Ascending aorta (tissue), 2 donors: ENCODE measurements at regions of chr10 and their contacts with region 1.

Region 1: DNA sequence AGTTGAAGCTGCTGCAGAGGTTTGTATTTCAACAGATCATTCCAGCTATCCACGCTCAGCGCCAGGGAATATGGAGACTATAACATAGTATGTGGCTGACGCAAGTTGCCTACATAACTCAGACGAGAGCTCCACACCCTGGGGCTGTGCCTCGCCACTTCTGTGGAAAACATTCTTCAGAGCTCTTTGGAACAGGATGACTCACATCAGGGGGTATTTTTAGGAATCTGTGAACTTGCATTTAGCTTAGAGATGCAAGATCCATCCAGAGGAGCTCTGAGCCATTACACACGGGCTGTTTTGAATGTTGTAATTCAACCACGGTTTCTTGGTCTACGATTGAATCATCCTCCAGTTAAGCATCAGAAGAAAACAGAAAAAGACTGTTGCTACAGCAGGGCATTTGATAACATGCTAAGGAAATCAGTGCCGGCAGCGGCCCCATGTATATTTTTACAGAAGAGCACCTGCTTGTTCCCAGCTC is 481.5 kb upstream of the AKR1E2 start:
- DNase-seq: peak; percentile 65 to 96
- H3K4me3 ChIP-seq: no peak overlapping the region
- H3K27ac ChIP-seq: peak overlapping the region; percentile 85 to 89
- H3K4me1 ChIP-seq: peaks cover 13 to 30% of the 10 kb centered on the region in 2 donors
- H3K27me3 ChIP-seq: no peaks in the 10 kb centered on the region
- CTCF ChIP-seq: peak; percentile 7 to 34 (median 14)

Region 2: GRCh38 chr10:3239066-3239919 is 1105.3 kb before region 1 on chr10:
- intact Hi-C with region 1: loop called (anchors 10 kb)
- DNase-seq: peak in 1 of 2 donors; percentile 83
- H3K4me3 ChIP-seq: no peak overlapping the region
- H3K27ac ChIP-seq: peak overlapping the region in 1 of 2 donors; percentile 54
- H3K4me1 ChIP-seq: peaks cover 0 to 6% of the 10 kb centered on the region in 2 donors
- H3K27me3 ChIP-seq: no peaks in the 10 kb centered on the region
- CTCF ChIP-seq: peak; percentile 89 to 97 (median 90)

Region 3: GRCh38 chr10:3785257-3785850 is 559.2 kb before region 1 on chr10:
- intact Hi-C with region 1: loop called (anchors 5 kb)
- DNase-seq: peak; percentile 94 to 99
- H3K4me3 ChIP-seq: peak overlapping the region; percentile 97 to 99
- H3K27ac ChIP-seq: peak overlapping the region; percentile 100
- H3K4me1 ChIP-seq: peaks cover 0 to 4% of the 10 kb centered on the region in 2 donors
- H3K27me3 ChIP-seq: no peaks in the 10 kb centered on the region
- CTCF ChIP-seq: no peak

Region 4: DNA sequence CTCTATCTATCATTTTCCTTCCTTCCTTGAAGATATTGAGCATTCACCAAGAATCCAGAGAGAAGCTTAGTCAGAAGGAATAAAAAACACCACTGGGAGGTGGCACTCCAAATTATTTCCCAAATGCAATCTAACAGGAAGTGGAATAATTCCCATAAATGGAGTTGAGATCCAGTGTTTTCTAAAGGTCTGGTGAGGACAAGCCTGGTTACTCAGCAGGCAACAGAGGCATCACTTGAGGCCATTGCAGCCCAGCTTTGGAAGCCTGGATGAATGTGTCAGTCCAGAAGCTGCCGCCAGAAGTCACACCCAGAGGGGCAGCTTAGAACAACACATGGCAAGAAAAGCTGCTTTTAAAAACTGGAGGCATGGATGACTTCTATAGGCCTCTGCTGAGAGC is 270.6 kb before region 1 on chr10:
- intact Hi-C with region 1: loop called (anchors 5 kb)
- DNase-seq: peak in 1 of 2 donors; percentile 87
- H3K4me3 ChIP-seq: no peak overlapping the region
- H3K27ac ChIP-seq: peak overlapping the region; percentile 64 to 78
- H3K4me1 ChIP-seq: peaks cover 8 to 42% of the 10 kb centered on the region in 2 donors
- H3K27me3 ChIP-seq: no peaks in the 10 kb centered on the region
- CTCF ChIP-seq: no peak

Region 5: DNA sequence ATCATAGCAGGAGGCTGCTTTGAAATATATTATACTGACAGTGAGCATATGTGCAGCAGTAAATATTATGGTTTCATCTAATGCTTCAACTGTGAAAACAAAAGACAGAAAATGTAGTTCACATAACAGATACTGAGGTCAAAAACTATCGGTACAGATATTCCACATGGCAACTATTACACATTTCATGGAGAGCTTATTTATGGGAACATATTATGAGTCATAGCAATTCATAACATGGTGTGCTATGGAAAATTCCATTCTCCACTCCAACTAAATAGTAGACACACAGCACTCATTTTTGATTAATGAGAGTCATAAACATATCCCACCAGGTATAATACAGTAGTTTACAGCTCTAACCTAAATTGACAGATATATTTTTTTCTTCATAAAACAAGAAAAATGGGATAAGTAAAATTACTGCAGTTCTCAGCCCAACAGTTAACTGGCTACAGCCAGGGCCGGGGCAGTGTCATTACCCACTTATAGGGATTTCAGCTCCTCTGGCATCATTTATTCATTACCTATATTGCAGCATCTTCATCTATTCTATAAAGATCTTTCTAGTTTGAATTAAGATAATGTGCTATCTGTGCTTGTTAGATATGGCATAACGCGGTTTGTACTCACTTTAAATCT is 83.9 kb before region 1 on chr10:
- intact Hi-C with region 1: loop called (anchors 5 kb)
- DNase-seq: no peak
- H3K4me3 ChIP-seq: peak overlapping the region in 1 of 2 donors; percentile 23
- H3K27ac ChIP-seq: peak overlapping the region; percentile 58 to 72
- H3K4me1 ChIP-seq: peaks cover 9 to 20% of the 10 kb centered on the region in 2 donors
- H3K27me3 ChIP-seq: no peaks in the 10 kb centered on the region
- CTCF ChIP-seq: no peak

Region 6: GRCh38 chr10:4283846-4284610 is 60.5 kb before region 1 on chr10:
- intact Hi-C with region 1: loop called (anchors 2 kb)
- DNase-seq: peak; percentile 61 to 94
- H3K4me3 ChIP-seq: no peak overlapping the region
- H3K27ac ChIP-seq: peak overlapping the region; percentile 86 to 92
- H3K4me1 ChIP-seq: peaks cover 9 to 57% of the 10 kb centered on the region in 2 donors
- H3K27me3 ChIP-seq: no peaks in the 10 kb centered on the region
- CTCF ChIP-seq: no peak

Region 7: DNA sequence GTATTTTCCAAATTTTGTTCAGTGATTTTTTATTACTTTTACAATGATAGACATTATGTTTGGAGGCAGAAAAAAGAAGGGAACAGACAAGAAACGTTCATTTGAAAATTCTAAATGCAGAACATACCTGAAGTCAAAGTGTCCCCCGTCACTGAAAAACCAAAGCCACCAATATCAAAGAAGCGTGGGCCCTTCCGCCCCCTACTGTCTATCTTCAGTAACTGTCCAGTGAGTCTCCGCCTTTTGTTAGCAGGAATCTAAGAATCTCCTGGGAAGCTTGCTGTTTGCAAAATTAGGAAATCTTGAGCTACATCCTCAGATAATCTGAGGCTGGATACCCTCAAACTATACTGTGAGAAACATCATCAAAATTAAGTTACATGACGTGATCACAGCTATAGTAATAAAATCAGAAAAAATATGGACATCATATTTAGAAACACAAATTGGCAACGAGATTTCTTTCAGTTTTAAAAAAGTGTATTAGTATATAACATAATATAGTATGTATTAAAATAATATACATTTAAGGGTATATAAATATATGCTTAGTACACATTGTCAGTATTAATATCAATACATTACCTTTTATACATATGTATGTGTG is 312.1 kb after region 1 on chr10:
- intact Hi-C with region 1: loop called (anchors 5 kb)
- DNase-seq: peak in 1 of 2 donors; percentile 70
- H3K4me3 ChIP-seq: no peak overlapping the region
- H3K27ac ChIP-seq: no peak overlapping the region
- H3K4me1 ChIP-seq: peaks cover 0 to 8% of the 10 kb centered on the region in 2 donors
- H3K27me3 ChIP-seq: no peaks in the 10 kb centered on the region
- CTCF ChIP-seq: peak; percentile 84 to 91 (median 84)